CD8-positive, alpha-beta T cell (primary cell): ENCODE measurements at regions of chr6 and their contacts with region 1.

Region 1: GRCh38 chr6:147192302-147192771 is 11.9 kb upstream of the STXBP5 start:
- DNase-seq: no peak
- ATAC-seq: no peak
- H3K4me3 ChIP-seq: no peak overlapping the region
- H3K4me3 Mint-ChIP-seq: no peak overlapping the region
- H3K27ac ChIP-seq: no peak overlapping the region
- H3K27ac Mint-ChIP-seq: no peak overlapping the region
- H3K4me1 ChIP-seq: no peaks in the 10 kb centered on the region
- H3K4me1 Mint-ChIP-seq: peaks cover 11% of the 10 kb centered on the region
- H3K27me3 ChIP-seq: no peaks in the 10 kb centered on the region
- H3K27me3 Mint-ChIP-seq: no peaks in the 10 kb centered on the region
- CTCF ChIP-seq: no peak

Region 2: GRCh38 chr6:147007441-147007840 is 184.9 kb before region 1 on chr6:
- CTCF ChIA-PET with region 1: no interaction called
- POLR2A ChIA-PET with region 1: no interaction called
- intact Hi-C with region 1: loop called in 1 of 2 experiments (anchors 2 kb)
- DNase-seq: no peak
- ATAC-seq: no peak
- H3K4me3 ChIP-seq: no peak overlapping the region
- H3K4me3 Mint-ChIP-seq: no peak overlapping the region
- H3K27ac ChIP-seq: no peak overlapping the region
- H3K27ac Mint-ChIP-seq: no peak overlapping the region
- H3K4me1 ChIP-seq: no peaks in the 10 kb centered on the region
- H3K4me1 Mint-ChIP-seq: no peaks in the 10 kb centered on the region
- H3K27me3 ChIP-seq: no peaks in the 10 kb centered on the region
- H3K27me3 Mint-ChIP-seq: no peaks in the 10 kb centered on the region
- CTCF ChIP-seq: no peak

Region 3: GRCh38 chr6:147675281-147675680 is 482.9 kb after region 1 on chr6:
- CTCF ChIA-PET with region 1: no interaction called
- POLR2A ChIA-PET with region 1: no interaction called
- intact Hi-C with region 1: no loop called
- DNase-seq: no peak
- ATAC-seq: no peak
- H3K4me3 ChIP-seq: no peak overlapping the region
- H3K4me3 Mint-ChIP-seq: no peak overlapping the region
- H3K27ac ChIP-seq: no peak overlapping the region
- H3K27ac Mint-ChIP-seq: no peak overlapping the region
- H3K4me1 ChIP-seq: no peaks in the 10 kb centered on the region
- H3K4me1 Mint-ChIP-seq: no peaks in the 10 kb centered on the region
- H3K27me3 ChIP-seq: no peaks in the 10 kb centered on the region
- H3K27me3 Mint-ChIP-seq: peaks cover 4% of the 10 kb centered on the region
- CTCF ChIP-seq: no peak